Activated T-helper 2 cell treated with anti-CD3 and anti-CD28 coated beads, Interferon-gamma antibody, Interleukin-2, Interleukin-4, amounts not matched to agents 10 μg/mL and 5 μg/mL and 100 μg/mL, durations not matched to agents 14 hours and 24 hours and 36 hours (primary cell): ENCODE measurements at regions of chr4 and their contacts with region 1.

Region 1: DNA sequence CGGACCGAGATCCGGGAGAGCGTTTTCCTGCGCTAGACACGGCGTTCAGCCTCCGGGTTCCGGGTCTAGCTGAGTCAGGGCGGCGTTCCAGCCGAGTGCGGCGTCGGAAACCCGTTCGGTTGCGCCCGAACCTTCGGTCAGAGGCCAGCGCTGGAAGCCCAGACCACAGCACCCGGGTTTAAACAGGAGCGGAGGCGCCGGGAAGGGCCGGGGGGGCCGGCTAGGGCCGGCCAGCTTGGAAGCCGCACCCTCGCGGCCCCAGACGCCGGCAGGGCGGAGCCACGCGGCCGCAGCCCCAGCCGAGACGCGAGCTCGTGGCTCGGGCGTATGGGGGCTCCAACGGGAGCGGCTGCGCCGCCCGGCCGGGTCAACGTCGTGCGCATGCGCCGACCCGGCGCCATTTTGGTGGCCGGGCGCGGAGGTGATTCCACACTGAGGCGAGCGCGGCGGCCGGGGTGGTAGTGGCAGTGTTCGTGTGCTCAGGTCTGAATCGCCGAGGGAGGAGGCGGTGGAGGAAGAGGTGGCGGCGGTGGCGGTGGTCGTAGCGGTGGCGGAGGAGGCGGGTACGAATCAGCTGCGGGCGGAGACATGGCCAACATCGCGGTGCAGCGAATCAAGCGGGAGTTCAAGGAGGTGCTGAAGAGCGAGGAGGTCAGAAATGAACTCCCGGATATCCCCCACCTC is at the start of gene UBE2K:
- DNase-seq: peak; percentile 87
- H3K4me3 Mint-ChIP-seq: peak within 1 kb of the TSS; percentile 99
- H3K27ac Mint-ChIP-seq: peak within 1 kb of the TSS; percentile 98
- H3K4me1 Mint-ChIP-seq: peaks cover 25% of the 10 kb centered on the region
- H3K27me3 Mint-ChIP-seq: no peaks in the 10 kb centered on the region
- total RNA-seq, gene UBE2K: 94.1 and 94.8 TPM in 2 replicates

Region 2: GRCh38 chr4:37737466-37737865 is 1960.4 kb before region 1 on chr4:
- intact Hi-C with region 1: no loop called
- DNase-seq: no peak
- H3K4me3 Mint-ChIP-seq: no peak overlapping the region
- H3K27ac Mint-ChIP-seq: no peak overlapping the region
- H3K4me1 Mint-ChIP-seq: peaks cover 2% of the 10 kb centered on the region
- H3K27me3 Mint-ChIP-seq: peaks cover 8% of the 10 kb centered on the region

Region 3: DNA sequence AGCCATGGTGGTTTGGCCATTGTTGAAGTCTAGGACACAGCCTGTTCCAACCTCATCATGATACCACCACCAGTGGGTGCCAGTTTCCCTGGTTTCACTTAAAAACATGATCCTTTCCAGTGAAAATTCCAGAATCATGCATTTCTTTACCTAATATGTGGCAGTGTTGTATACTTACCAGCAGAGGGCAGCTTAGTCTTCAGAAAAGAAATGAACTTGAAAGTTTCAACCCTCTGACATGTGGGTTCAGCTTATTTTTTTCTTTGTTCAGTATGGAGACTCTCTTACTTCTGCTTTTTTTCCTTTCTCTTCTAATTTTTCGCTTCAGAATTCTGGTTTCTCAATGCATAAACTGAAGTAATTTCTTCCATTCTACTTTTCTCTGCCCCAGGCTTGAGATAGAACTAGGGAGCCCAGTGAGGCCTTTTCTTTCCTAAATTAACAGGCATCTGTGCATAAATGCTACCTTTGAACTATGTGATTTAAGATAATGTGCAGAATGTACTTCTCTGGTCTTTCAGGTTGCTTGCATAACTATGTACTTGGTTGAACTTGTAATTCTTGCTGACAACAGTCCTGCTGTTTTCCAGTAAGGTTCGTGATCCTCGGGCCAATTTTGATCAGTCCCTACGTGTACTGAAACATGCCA is 228.3 kb before region 1 on chr4:
- intact Hi-C with region 1: loop called (anchors 1 kb)
- DNase-seq: no peak
- H3K4me3 Mint-ChIP-seq: no peak overlapping the region
- H3K27ac Mint-ChIP-seq: peak overlapping the region; percentile 60
- H3K4me1 Mint-ChIP-seq: peaks cover 13% of the 10 kb centered on the region
- H3K27me3 Mint-ChIP-seq: no peaks in the 10 kb centered on the region

Region 4: GRCh38 chr4:39527273-39528060 is 170.4 kb before region 1 on chr4 and contains the start of gene UGDH:
- intact Hi-C with region 1: loop called (anchors 5 kb)
- DNase-seq: peak; percentile 90
- H3K4me3 Mint-ChIP-seq: peak within 1 kb of the TSS; percentile 98
- H3K27ac Mint-ChIP-seq: peak within 1 kb of the TSS; percentile 94
- H3K4me1 Mint-ChIP-seq: peaks cover 16% of the 10 kb centered on the region
- H3K27me3 Mint-ChIP-seq: no peaks in the 10 kb centered on the region
- total RNA-seq, gene UGDH: 34.8 and 40.1 TPM in 2 replicates

Region 5: GRCh38 chr4:39638354-39639240 is 59.3 kb before region 1 on chr4 and contains the start of gene SMIM14:
- intact Hi-C with region 1: loop called (anchors 2 kb)
- DNase-seq: peak; percentile 86
- H3K4me3 Mint-ChIP-seq: peak within 1 kb of the TSS; percentile 86
- H3K27ac Mint-ChIP-seq: peak within 1 kb of the TSS; percentile 67
- H3K4me1 Mint-ChIP-seq: peaks cover 27% of the 10 kb centered on the region
- H3K27me3 Mint-ChIP-seq: peaks cover 28% of the 10 kb centered on the region
- total RNA-seq, gene SMIM14: 1.7 and 1.9 TPM in 2 replicates

Region 6: GRCh38 chr4:39873823-39874222 is 175.9 kb after region 1 on chr4:
- intact Hi-C with region 1: loop called (anchors 10 kb)
- DNase-seq: no peak
- H3K4me3 Mint-ChIP-seq: no peak overlapping the region
- H3K27ac Mint-ChIP-seq: no peak overlapping the region
- H3K4me1 Mint-ChIP-seq: peaks cover 17% of the 10 kb centered on the region
- H3K27me3 Mint-ChIP-seq: no peaks in the 10 kb centered on the region

Region 7: GRCh38 chr4:40056716-40057585 is 359.1 kb after region 1 on chr4 and contains the start of gene N4BP2:
- intact Hi-C with region 1: loop called (anchors 5 kb)
- DNase-seq: peak; percentile 68
- H3K4me3 Mint-ChIP-seq: peak within 1 kb of the TSS; percentile 96
- H3K27ac Mint-ChIP-seq: peak within 1 kb of the TSS; percentile 99
- H3K4me1 Mint-ChIP-seq: peaks cover 25% of the 10 kb centered on the region
- H3K27me3 Mint-ChIP-seq: no peaks in the 10 kb centered on the region
- total RNA-seq, gene N4BP2: 23.2 and 23.8 TPM in 2 replicates

Region 8: DNA sequence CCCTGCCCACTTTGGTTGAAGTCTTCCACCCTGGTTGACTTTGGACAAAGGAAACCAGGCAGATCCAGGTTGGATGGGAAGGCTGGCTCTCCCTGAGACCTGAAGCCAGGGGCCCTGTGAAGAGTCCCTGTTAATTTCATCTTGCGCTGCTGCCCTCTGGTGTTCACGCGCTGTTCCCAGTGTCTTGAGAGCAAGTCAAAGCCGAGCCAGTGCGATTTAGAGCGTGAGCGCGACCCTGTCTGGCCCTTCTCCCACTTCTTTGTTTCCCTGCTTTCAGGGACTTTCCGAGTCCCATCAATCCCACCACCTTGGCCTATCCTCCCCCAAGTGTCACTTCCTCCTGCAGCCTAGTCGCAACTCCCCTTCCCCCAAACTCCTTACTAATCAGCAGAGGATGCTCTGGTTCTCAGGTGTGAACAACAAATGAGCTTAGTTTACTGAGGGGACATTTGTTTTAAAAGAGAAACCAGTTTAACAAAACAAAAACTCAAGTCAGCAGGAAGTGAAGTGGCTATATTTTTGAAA is 611.4 kb after region 1 on chr4:
- intact Hi-C with region 1: loop called (anchors 5 kb)
- DNase-seq: peak; percentile 82
- H3K4me3 Mint-ChIP-seq: peak overlapping the region; percentile 45
- H3K27ac Mint-ChIP-seq: peak overlapping the region; percentile 95
- H3K4me1 Mint-ChIP-seq: peaks cover 80% of the 10 kb centered on the region
- H3K27me3 Mint-ChIP-seq: no peaks in the 10 kb centered on the region